Mammary epithelial cell (primary cell): ENCODE measurements at regions of chr4 and their contacts with region 1.

Region 1: DNA sequence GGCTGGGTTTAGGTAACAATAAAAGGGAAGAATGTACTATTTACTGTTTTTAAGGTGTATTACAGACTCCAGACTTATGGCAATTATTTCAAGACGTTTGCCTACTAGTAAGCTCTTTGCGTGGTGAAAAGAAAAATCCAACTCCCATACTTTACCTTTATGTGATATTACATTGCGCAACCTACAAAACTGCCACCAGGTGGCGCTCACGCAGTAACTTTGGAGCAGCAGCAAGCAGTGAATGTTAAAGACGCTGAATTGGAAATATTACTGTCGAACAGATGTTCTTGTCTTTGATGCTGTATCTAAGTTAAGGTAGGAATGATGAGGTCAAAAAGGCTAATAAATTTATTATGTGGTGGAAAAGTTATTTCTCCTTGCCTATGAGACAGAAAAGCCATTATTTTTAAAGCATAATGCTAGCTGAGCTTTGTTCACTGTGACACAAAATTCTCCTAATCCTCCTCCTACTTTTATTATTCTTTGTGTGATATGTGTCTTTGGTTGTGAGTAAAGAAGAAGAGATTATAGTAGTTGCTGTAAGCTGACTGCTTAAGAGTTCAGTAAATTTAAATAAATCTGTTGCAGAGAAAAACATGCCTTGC is 1099.8 kb upstream of the TENM3 start:
- DNase-seq: peak; percentile 50
- H3K4me3 ChIP-seq: no peak overlapping the region
- H3K27ac ChIP-seq: no peak overlapping the region
- H3K4me1 ChIP-seq: no peaks in the 10 kb centered on the region
- H3K27me3 ChIP-seq: no peaks in the 10 kb centered on the region
- CTCF ChIP-seq: peak; percentile 75 to 81

Region 2: GRCh38 chr4:181051931-181052330 is 91.4 kb before region 1 on chr4:
- CTCF ChIA-PET with region 1: no interaction called
- dilution Hi-C with region 1: no loop called
- in situ Hi-C with region 1: no loop called
- intact Hi-C with region 1: no loop called
- DNase-seq: no peak
- H3K4me3 ChIP-seq: no peak overlapping the region
- H3K27ac ChIP-seq: no peak overlapping the region
- H3K4me1 ChIP-seq: no peaks in the 10 kb centered on the region
- H3K27me3 ChIP-seq: peaks cover 4% of the 10 kb centered on the region
- CTCF ChIP-seq: no peak

Region 3: GRCh38 chr4:181085557-181085956 is 57.8 kb before region 1 on chr4:
- CTCF ChIA-PET with region 1: no interaction called
- dilution Hi-C with region 1: no loop called
- in situ Hi-C with region 1: no loop called
- intact Hi-C with region 1: no loop called
- DNase-seq: no peak
- H3K4me3 ChIP-seq: no peak overlapping the region
- H3K27ac ChIP-seq: no peak overlapping the region
- H3K4me1 ChIP-seq: no peaks in the 10 kb centered on the region
- H3K27me3 ChIP-seq: no peaks in the 10 kb centered on the region
- CTCF ChIP-seq: no peak

Region 4: DNA sequence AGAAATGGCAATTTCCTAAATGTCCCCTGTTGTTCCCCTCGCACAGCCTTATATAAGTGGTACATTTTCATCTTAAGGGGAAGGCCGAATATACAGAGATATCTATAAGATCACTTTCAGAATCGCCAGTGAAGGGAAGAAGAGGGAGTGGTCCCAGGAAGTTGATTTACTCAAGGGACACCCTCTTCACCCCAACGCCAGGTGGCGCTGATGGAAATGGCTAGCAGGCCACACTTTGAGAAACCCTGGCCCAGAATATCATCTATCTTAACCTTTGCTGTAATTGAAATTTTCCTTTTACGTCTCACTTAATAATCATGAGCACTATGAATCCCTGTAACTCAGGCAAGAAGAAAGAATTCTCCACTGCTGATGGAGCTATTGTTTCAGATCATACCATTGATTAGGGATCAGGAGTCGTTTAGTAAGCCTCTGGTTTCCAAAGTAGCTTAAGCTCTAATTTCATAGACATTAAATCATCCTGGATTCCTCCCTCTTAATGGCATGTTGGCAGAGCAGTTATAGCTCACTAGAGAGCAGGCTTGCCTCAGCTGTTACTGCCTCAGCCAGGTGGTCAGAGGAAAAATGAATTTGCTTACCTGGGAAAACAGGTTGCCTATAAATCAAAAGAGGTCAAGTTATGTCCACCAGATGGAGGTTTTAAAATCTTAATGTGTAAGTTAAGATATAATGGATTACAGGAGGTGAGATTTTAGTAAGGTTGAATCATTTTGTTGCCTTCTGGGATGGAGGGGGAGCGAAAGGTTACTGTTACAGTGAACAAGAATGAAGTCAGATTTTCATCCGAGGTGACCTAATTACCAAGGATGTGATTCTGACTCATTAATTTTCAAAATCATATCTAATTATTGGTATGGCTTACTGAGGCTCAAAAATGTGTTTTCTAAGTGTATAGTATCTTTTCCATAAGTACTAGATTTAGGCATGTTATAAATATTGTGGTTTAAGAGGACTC is 158.7 kb after region 1 on chr4:
- CTCF ChIA-PET with region 1: no interaction called
- dilution Hi-C with region 1: no loop called
- in situ Hi-C with region 1: no loop called
- intact Hi-C with region 1: loop called (anchors 5 kb)
- DNase-seq: peak; percentile 24
- H3K4me3 ChIP-seq: no peak overlapping the region
- H3K27ac ChIP-seq: no peak overlapping the region
- H3K4me1 ChIP-seq: no peaks in the 10 kb centered on the region
- H3K27me3 ChIP-seq: no peaks in the 10 kb centered on the region
- CTCF ChIP-seq: peak; percentile 75 to 87